Calu3 (cell line): ENCODE measurements at regions of chr3 and their contacts with region 1.

Region 1: DNA sequence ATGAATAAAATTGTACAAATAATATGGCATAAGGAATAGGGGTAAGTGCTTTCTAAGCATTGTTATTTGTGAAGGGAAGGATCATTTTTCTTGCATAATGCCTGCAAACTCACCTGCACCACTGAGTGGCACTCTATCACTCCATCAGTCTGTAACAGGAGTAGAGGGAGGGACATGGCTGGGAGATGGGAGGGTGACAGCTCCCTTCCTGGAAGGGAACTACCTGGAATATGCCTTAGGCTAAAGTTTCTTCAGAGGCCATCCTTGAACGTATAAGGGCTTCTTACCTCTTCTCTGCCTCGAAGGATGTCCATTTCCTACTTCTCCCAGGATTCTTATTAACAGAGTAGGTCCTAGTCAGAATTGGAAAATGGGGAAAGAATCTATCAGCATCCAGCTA is 3.0 kb downstream of the NAALADL2 start:
- DNase-seq: peak; percentile 80
- H3K4me3 Mint-ChIP-seq: peak overlapping the region; percentile 83
- H3K27ac Mint-ChIP-seq: peak overlapping the region; percentile 71
- H3K4me1 Mint-ChIP-seq: peaks cover 53% of the 10 kb centered on the region
- H3K27me3 Mint-ChIP-seq: no peaks in the 10 kb centered on the region
- CTCF ChIP-seq: peak; percentile 81

Region 2: DNA sequence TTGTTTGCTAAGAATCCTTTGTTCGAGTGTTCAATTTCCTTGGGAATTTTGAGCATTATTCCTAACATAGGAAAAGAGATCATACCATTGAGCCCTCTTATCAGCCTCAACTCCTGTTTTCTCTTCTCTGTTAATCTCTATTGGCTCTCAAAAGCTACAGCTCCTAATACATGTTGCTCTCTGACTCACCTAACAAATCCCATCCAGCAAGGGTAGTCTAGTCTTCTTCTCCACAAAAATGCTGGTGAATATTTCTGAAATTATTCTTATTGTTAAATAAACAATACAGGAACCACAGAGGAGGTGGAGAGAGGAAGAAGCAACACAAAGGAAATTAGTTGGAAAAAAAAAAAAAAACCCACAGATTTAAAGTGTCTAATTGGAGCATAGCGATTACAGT is 328.9 kb before region 1 on chr3:
- CTCF ChIA-PET with region 1: no interaction called
- intact Hi-C with region 1: loop called (anchors 2 kb)
- DNase-seq: no peak
- H3K4me3 Mint-ChIP-seq: peak overlapping the region; percentile 51
- H3K27ac Mint-ChIP-seq: peak overlapping the region; percentile 83
- H3K4me1 Mint-ChIP-seq: peaks cover 41% of the 10 kb centered on the region
- H3K27me3 Mint-ChIP-seq: no peaks in the 10 kb centered on the region
- CTCF ChIP-seq: no peak

Region 3: GRCh38 chr3:174662653-174663052 is 199.5 kb before region 1 on chr3:
- CTCF ChIA-PET with region 1: no interaction called
- intact Hi-C with region 1: no loop called
- DNase-seq: no peak
- H3K4me3 Mint-ChIP-seq: no peak overlapping the region
- H3K27ac Mint-ChIP-seq: no peak overlapping the region
- H3K4me1 Mint-ChIP-seq: no peaks in the 10 kb centered on the region
- H3K27me3 Mint-ChIP-seq: no peaks in the 10 kb centered on the region
- CTCF ChIP-seq: no peak

Region 4: GRCh38 chr3:174949526-174949925 is 87.4 kb after region 1 on chr3:
- CTCF ChIA-PET with region 1: interaction called, 3 read pairs
- intact Hi-C with region 1: loop called (anchors 1 kb)
- DNase-seq: peak; percentile 24
- H3K4me3 Mint-ChIP-seq: no peak overlapping the region
- H3K27ac Mint-ChIP-seq: peak overlapping the region; percentile 90
- H3K4me1 Mint-ChIP-seq: peaks cover 53% of the 10 kb centered on the region
- H3K27me3 Mint-ChIP-seq: no peaks in the 10 kb centered on the region
- CTCF ChIP-seq: no peak

Region 5: DNA sequence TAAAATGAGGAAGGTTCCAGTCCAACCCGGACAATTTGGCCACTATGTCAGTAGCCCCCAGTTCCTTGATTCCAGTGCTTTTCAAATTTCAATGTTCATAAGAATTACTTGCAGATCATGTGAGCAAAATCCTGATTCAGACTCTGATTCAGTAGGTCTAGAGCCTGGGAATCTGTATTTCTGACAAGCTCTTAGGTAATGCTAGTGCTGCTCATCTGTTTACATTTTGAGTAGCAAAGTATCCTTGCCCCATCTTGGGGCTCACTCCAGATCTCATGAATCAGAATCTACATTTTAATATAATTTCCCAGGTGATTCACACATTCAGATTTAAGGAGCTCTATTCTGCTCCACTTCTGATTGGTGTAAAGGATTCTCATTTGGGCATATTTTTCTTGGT is 138.9 kb after region 1 on chr3:
- CTCF ChIA-PET with region 1: no interaction called
- intact Hi-C with region 1: no loop called
- DNase-seq: no peak
- H3K4me3 Mint-ChIP-seq: no peak overlapping the region
- H3K27ac Mint-ChIP-seq: no peak overlapping the region
- H3K4me1 Mint-ChIP-seq: no peaks in the 10 kb centered on the region
- H3K27me3 Mint-ChIP-seq: no peaks in the 10 kb centered on the region
- CTCF ChIP-seq: no peak

Region 6: DNA sequence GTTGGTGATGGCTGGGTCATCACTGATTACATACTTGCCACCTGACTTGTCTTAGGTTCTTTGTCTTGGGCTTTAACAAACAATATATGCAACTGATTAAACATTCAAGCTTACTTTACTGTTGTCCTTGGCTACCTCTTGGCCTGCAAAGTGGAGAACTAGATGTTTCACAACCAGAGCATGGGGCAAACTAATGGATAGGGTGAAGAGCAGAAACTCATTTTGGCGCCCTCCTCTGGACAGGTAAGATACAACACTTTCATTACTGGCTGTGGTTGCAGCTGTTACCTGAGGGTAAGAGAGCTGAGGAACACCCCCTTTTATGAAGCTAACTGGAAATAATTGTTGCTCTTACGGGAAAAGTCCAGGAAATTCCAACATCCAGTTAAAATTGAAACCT is 259.1 kb after region 1 on chr3:
- CTCF ChIA-PET with region 1: interaction called, 5 read pairs
- intact Hi-C with region 1: loop called (anchors 1 kb)
- DNase-seq: peak; percentile 67
- H3K4me3 Mint-ChIP-seq: no peak overlapping the region
- H3K27ac Mint-ChIP-seq: no peak overlapping the region
- H3K4me1 Mint-ChIP-seq: no peaks in the 10 kb centered on the region
- H3K27me3 Mint-ChIP-seq: no peaks in the 10 kb centered on the region
- CTCF ChIP-seq: peak; percentile 70

Region 7: GRCh38 chr3:175495331-175495730 is 633.2 kb after region 1 on chr3:
- CTCF ChIA-PET with region 1: no interaction called
- intact Hi-C with region 1: loop called (anchors 5 kb)
- DNase-seq: no peak
- H3K4me3 Mint-ChIP-seq: no peak overlapping the region
- H3K27ac Mint-ChIP-seq: peak overlapping the region; percentile 8
- H3K4me1 Mint-ChIP-seq: peaks cover 51% of the 10 kb centered on the region
- H3K27me3 Mint-ChIP-seq: no peaks in the 10 kb centered on the region
- CTCF ChIP-seq: no peak

Region 8: GRCh38 chr3:176167245-176167644 is 1305.1 kb after region 1 on chr3:
- CTCF ChIA-PET with region 1: no interaction called
- intact Hi-C with region 1: loop called (anchors 5 kb)
- DNase-seq: peak; percentile 78
- H3K4me3 Mint-ChIP-seq: peak overlapping the region; percentile 15
- H3K27ac Mint-ChIP-seq: peak overlapping the region; percentile 86
- H3K4me1 Mint-ChIP-seq: peaks cover 28% of the 10 kb centered on the region
- H3K27me3 Mint-ChIP-seq: no peaks in the 10 kb centered on the region
- CTCF ChIP-seq: no peak